ENCODE measurements at regions of chr1 and their contacts with region 1.

Region 1: DNA sequence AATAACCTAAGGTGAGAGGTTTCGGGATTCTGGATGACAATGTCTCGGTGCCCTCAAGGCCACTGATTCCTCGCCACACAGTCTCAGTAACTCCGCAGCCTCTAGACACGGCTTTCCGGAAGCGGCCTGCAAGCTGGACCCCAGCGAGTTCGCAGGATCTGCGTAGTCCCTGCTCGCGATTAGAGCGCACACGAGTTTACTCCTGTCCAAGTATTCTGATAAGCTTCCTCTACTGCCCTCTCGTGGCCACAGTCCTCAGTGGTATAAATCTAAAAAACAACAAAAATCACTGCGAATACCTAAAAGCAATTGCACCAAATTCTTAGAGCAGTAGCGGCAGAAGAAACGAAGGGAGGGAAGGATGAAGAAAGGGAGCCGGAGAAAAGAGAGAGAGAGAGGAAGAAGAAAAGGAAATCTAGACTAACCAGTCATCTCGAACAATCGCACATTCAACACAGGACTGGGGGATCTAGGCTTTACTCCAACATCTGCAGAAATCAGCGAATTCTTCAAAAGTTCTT is 1.1 kb upstream of the PLXNA2 start:
- DNase-seq: peak; percentile 58
- H3K4me3 ChIP-seq: no peak overlapping the region; the same call in 1 of the 2 replicates
- H3K27me3 ChIP-seq: peaks cover 1% of the 10 kb centered on the region; the same call in 1 of the 2 replicates
- CTCF ChIP-seq: peak; percentile 76

Region 2: DNA sequence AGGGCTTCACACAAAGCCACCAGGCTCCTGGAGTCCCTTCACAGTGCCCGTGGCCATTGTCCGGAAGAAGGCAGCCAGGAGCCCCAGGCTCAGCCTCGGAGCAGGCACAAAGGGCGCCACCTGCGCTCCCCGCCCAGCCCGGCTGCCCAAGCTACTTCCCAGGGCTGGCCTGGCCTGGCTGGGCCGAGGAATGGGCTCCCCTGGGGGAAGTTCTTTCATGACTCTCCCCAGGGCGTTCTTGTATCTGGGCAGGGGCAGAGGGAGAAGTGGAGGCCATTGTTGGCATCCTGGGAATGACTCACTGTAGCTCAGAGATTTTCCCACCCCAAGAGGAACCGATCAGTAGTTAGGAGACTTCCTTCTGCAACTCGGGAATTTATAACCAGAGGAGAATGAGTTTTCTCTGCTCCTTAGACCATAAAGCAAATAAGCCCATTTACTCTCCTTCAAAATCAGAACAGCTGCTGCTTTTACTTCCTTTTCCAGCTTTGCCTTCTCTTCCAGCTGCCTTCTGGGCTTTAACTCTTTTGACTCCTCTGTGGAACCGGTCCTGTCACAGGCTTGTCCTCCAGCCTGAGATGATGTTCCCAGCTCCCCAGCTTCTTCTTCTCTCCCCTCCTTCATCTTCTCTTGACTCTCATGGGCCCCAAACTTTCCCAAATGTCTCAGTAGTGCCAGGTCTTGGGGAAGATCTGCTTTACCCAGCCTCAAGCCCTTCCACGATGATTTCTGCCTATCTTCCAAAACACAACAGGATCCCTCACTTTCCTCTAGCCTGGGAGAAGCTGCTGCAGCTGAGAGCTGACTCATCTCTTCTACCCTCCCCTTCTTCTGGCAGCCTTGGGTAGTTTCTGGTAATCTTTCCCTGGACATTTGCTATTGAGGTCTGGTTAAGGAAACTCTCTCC is 215.6 kb before region 1 on chr1:
- CTCF ChIA-PET with region 1: interaction called, 351 read pairs
- POLR2A ChIA-PET with region 1: interaction called, 4 read pairs
- DNase-seq: no peak
- H3K4me3 ChIP-seq: no peak overlapping the region
- H3K27me3 ChIP-seq: no peaks in the 10 kb centered on the region
- CTCF ChIP-seq: no peak

Region 3: GRCh38 chr1:208110296-208110695 is 134.9 kb before region 1 on chr1:
- CTCF ChIA-PET with region 1: interaction called, 22 read pairs
- POLR2A ChIA-PET with region 1: no interaction called
- DNase-seq: no peak
- H3K4me3 ChIP-seq: no peak overlapping the region
- H3K27me3 ChIP-seq: no peaks in the 10 kb centered on the region
- CTCF ChIP-seq: no peak

Region 4: DNA sequence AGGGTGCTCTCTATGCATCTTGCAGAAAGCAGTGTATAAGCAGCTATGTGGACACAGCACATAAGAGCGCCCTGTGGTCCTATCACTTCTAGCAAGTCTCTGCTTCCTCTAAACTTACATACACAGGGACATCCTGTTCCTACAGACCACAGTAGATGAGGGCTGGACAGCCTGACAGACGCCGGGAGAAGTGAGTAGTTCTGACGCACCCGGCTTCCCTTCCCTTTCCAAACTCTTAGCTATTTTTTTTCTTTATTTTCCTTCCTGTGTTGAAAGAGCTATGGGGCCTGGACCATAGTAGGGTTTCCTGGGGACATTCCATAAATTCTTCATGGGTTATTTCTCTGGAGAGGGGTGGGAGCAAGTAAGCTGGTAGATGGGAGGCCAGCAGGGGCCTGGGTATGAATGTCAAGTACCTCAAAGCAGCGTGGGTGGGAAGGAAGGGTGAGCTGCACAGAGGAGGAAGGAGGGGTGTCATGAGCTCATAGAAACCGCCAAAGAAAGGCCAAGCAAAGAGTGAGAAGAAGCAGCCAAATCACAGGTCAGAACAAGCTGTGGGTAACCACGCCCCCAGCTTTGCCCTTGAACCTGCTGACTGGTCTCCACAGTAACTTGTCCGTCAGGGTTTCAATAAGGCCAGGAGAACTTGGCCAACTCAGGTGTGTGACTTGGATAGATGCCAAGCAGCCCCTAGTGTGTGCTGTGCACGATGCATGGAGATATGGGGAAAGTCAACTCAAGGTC is 37.7 kb before region 1 on chr1:
- CTCF ChIA-PET with region 1: interaction called, 12 read pairs
- POLR2A ChIA-PET with region 1: interaction called, 6 read pairs
- DNase-seq: peak; percentile 63
- H3K4me3 ChIP-seq: no peak overlapping the region
- H3K27me3 ChIP-seq: no peaks in the 10 kb centered on the region
- CTCF ChIP-seq: no peak

Region 5: DNA sequence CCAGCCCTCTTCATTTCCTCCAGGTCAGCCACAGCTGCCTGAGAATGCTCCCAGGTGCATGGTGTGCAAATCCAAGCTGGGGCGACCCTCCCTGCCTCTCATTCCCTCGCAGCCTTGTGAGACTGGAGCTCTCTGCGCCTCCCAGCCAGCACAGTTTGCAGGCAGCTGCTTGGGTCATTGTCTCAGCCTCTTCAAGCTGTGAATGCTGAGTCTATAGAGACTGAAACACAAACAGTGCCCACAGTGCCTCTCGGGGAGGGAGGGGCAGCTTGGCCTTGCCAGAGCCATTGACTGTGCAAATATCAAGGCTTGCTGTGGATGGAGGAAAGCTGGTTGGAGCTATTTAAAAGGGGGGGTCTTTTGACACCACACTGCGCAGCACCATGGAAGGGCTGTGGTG is 11.7 kb before region 1 on chr1:
- CTCF ChIA-PET with region 1: interaction called, 21 read pairs
- POLR2A ChIA-PET with region 1: no interaction called
- DNase-seq: no peak
- H3K4me3 ChIP-seq: no peak overlapping the region
- H3K27me3 ChIP-seq: no peaks in the 10 kb centered on the region
- CTCF ChIP-seq: no peak

Measured in BJ (cell line).